GM10248 (cell line): ENCODE measurements at regions of chr1 and their contacts with region 1.

Region 1: DNA sequence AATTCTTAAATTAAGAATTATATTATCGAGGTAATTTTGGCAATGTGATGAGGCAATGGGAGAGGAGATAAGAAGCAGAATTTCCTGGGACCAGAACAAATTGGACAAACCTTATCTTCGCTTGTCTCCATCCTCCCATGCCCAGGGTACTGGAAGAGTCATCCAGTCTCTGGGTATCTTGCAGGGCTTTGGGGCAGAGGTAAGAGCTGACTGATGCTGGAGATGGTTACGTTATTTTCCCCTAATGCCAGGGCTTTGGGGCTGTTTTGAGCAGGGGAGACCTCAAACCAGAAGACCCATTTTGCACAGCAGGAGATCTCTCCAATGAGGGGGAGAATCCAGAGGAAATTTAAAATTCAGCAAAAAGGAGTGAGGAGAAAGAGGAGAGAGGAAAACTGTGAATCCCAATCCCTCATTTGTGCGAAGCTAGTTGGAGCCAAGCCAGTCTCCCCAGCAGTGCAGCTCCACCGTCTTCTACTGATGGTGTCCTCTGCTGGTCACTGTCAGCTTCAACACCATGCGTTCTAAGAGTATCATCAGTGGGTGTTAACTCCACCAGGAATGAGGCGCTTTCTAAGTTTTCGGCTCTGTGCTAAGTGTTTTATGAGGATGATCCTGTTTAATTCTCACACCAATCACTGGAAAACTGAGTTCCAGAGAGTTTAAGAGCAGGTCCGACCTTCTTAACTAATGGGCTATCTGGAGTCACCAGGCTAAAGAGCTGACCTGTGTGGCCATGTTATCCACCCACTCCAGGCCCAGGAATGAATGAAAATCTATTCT is 86.8 kb upstream of the CD34 start:
- DNase-seq: peak; percentile 62
- CTCF ChIP-seq: peak; percentile 89

Region 2: DNA sequence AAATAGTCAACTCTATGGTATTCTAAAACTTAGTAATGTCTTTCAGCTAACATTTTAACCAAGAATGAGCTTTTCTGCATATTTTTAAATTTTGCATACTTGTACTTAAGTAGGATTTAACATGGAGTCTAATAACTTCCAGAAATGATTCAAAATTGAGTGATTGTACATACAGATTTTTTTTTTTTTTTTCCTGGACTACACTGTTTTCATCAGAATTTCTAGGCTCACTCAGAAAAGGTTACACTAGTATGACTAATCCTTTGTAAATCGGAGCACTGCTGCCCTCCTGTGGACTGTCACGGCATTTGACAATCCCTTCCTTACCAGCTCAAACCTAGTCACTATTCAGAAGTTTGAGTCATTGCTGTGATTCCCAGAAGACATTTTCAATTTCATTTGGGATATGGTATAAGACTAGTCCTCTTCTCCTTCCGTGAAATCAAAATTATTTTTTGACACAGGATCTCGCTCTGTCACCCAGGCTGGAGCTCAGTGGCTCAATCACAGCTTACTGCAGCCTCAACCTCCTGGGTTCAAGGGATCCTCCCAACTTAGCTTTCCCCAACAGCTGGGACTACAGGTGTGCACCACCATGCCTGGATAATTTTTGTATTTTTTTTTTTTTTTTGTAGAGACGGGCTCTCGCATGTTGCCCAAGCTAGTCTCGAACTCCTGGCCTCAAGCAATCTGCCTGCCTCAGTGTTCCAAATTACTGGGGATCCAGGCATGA is 200.3 kb before region 1 on chr1:
- CTCF ChIA-PET with region 1: no interaction called
- POLR2A ChIA-PET with region 1: no interaction called
- DNase-seq: peak; percentile 68
- CTCF ChIP-seq: peak; percentile 83

Region 3: GRCh38 chr1:207973898-207974568 is 23.6 kb before region 1 on chr1:
- CTCF ChIA-PET with region 1: interaction called, 10 read pairs
- POLR2A ChIA-PET with region 1: no interaction called
- DNase-seq: peak; percentile 27
- CTCF ChIP-seq: no peak

Region 4: DNA sequence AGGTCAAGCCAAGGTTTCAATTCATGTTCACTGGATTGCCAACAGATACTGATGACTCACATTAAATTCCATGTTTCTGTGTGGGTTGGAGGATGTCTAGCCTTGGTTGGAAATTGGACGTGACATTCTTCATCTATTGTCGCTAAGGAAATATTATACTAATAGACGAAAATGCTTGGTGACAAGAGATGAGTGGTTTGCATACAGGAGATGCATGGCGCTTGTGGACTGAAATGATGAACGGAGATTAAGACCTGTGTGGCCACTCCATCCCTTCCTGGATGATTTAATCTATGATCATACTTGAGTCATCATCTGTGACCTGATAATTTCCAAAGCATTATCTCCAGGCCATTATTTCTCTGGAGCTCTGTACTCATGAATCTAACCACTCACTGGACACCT is 10.3 kb after region 1 on chr1:
- CTCF ChIA-PET with region 1: interaction called, 34 read pairs
- POLR2A ChIA-PET with region 1: no interaction called
- DNase-seq: no peak
- CTCF ChIP-seq: no peak

Region 5: GRCh38 chr1:208013210-208013609 is 15.5 kb after region 1 on chr1:
- CTCF ChIA-PET with region 1: interaction called, 34 read pairs
- POLR2A ChIA-PET with region 1: no interaction called
- DNase-seq: no peak
- CTCF ChIP-seq: no peak